ENCODE measurements at regions of chr14 and their contacts with region 1.

Region 1: GRCh38 chr14:60331201-60332045 is 82.4 kb downstream of the PPM1A start:
- DNase-seq: peak; percentile 53
- ATAC-seq: peak; percentile 68
- H3K4me3 Mint-ChIP-seq: peak overlapping the region; percentile 96
- H3K27ac Mint-ChIP-seq: peak overlapping the region; percentile 92
- H3K4me1 Mint-ChIP-seq: peaks cover 26% of the 10 kb centered on the region
- H3K27me3 Mint-ChIP-seq: peaks cover 19% of the 10 kb centered on the region
- CTCF ChIP-seq: peak; percentile 70

Region 2: GRCh38 chr14:60064491-60065072 is 266.8 kb before region 1 on chr14:
- CTCF ChIA-PET with region 1: no interaction called
- POLR2A ChIA-PET with region 1: no interaction called
- intact Hi-C with region 1: loop called (anchors 1 kb)
- DNase-seq: no peak
- ATAC-seq: peak; percentile 57
- H3K4me3 Mint-ChIP-seq: no peak overlapping the region
- H3K27ac Mint-ChIP-seq: no peak overlapping the region
- H3K4me1 Mint-ChIP-seq: no peaks in the 10 kb centered on the region
- H3K27me3 Mint-ChIP-seq: peaks cover 4% of the 10 kb centered on the region
- CTCF ChIP-seq: peak; percentile 54

Region 3: DNA sequence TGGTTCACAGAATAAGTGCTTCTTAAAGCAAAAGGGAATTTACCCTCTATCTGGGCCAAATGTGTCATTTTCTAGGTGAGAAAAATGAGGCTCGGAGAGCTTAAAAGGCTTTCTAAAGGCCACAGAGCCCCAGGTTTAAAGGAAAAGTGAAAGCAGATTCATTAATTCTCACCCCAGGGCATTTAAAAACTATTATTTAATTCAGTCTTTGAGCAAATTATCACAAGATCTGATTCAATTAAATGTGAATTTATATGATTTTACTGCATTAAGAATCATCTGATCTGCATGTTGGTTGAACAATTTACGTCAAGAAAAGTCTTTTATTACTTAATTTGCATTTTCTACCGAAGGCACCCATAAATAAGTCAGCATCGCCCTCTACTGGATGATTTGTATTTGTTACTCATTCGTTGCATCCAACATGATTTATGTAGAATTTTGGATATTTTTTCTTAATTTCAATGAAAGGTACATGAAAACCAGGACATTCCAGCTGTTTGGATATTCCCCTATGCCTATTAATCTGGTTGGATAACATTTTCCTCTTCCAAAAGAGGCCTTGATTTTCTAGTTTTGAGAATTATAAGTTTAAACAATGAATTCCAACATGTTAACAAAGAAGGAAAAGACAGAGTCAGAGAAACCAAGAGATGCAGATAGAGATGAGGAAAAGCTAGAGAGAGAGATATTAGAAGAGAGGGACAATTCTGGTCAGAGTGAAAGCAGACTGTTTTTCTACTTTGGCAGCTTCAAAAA is 147.1 kb before region 1 on chr14:
- CTCF ChIA-PET with region 1: interaction called, 6 read pairs
- POLR2A ChIA-PET with region 1: no interaction called
- intact Hi-C with region 1: loop called (anchors 5 kb)
- DNase-seq: no peak
- ATAC-seq: peak; percentile 56
- H3K4me3 Mint-ChIP-seq: peak overlapping the region; percentile 82
- H3K27ac Mint-ChIP-seq: peak overlapping the region; percentile 87
- H3K4me1 Mint-ChIP-seq: peaks cover 17% of the 10 kb centered on the region
- H3K27me3 Mint-ChIP-seq: no peaks in the 10 kb centered on the region
- CTCF ChIP-seq: peak; percentile 89

Region 4: GRCh38 chr14:60349663-60350365 is 18.4 kb after region 1 on chr14:
- CTCF ChIA-PET with region 1: interaction called, 21 read pairs
- POLR2A ChIA-PET with region 1: no interaction called
- intact Hi-C with region 1: no loop called
- DNase-seq: no peak
- ATAC-seq: no peak
- H3K4me3 Mint-ChIP-seq: no peak overlapping the region
- H3K27ac Mint-ChIP-seq: no peak overlapping the region
- H3K4me1 Mint-ChIP-seq: peaks cover 3% of the 10 kb centered on the region
- H3K27me3 Mint-ChIP-seq: peaks cover 9% of the 10 kb centered on the region
- CTCF ChIP-seq: no peak

Region 5: DNA sequence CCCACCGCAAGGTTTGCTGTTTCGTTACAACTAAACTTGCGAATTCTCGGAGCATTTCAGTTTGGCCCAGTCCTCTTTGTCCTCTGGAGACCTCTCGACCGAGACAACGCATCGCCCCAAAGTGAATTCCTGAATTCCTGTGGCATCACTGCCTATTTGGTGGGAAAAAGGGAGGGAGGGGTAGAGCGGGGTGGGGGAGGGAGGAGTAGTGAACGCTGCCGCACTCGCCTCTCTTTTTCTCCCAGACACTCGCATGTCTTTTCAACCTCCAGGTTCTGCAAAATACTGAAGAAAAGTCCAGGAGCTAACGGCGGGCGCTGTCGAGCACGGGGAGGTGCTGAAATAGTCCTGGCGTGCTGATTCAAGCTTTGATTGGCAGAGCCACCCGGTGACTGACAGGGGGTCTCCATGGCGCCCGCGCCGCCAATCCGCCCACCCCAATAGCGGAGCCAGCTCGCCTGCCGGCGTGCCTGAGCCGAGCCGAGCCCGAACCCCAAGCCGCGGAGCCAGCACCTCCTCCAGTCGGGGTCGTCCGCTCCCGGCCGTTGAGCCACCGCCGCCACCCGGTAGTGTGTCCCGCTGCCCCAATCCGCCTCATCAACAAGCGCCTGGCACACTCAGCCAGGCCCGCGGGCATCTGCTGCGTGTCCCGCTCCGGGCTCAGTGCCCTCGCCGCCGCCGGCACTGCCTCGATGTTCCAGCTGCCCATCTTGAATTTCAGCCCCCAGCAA is 177.4 kb after region 1 on chr14 and contains the start of gene SIX6:
- CTCF ChIA-PET with region 1: no interaction called
- POLR2A ChIA-PET with region 1: no interaction called
- intact Hi-C with region 1: no loop called
- DNase-seq: no peak
- ATAC-seq: no peak
- H3K4me3 Mint-ChIP-seq: no peak within 1 kb of the TSS
- H3K27ac Mint-ChIP-seq: no peak within 1 kb of the TSS
- H3K4me1 Mint-ChIP-seq: peaks cover 5% of the 10 kb centered on the region
- H3K27me3 Mint-ChIP-seq: peaks cover 62% of the 10 kb centered on the region
- CTCF ChIP-seq: no peak
- total RNA-seq, gene SIX6: not detected in 2 replicates

Region 6: GRCh38 chr14:60656686-60657455 is 325.4 kb after region 1 on chr14:
- CTCF ChIA-PET with region 1: no interaction called
- POLR2A ChIA-PET with region 1: no interaction called
- intact Hi-C with region 1: loop called (anchors 10 kb)
- DNase-seq: peak; percentile 58
- ATAC-seq: peak; percentile 88
- H3K4me3 Mint-ChIP-seq: peak overlapping the region; percentile 90
- H3K27ac Mint-ChIP-seq: no peak overlapping the region
- H3K4me1 Mint-ChIP-seq: peaks cover 39% of the 10 kb centered on the region
- H3K27me3 Mint-ChIP-seq: peaks cover 68% of the 10 kb centered on the region
- CTCF ChIP-seq: no peak

Region 7: GRCh38 chr14:61025251-61026223 is 694.1 kb after region 1 on chr14:
- CTCF ChIA-PET with region 1: no interaction called
- POLR2A ChIA-PET with region 1: no interaction called
- intact Hi-C with region 1: loop called (anchors 5 kb)
- DNase-seq: no peak
- ATAC-seq: peak; percentile 57
- H3K4me3 Mint-ChIP-seq: no peak overlapping the region
- H3K27ac Mint-ChIP-seq: no peak overlapping the region
- H3K4me1 Mint-ChIP-seq: peaks cover under 1% of the 10 kb centered on the region
- H3K27me3 Mint-ChIP-seq: no peaks in the 10 kb centered on the region
- CTCF ChIP-seq: peak; percentile 83

Measured in activated B cell treated with CpG ODN at 0.5 μM for 24 hours (primary cell).